ENCODE measurements at regions of chrX and their contacts with region 1.

Region 1: GRCh38 chrX:81121513-81122382 is 80.0 kb downstream of the HMGN5 start:
- DNase-seq: peak; percentile 86
- ATAC-seq: peak; percentile 95
- H3K4me3 ChIP-seq: peak overlapping the region; percentile 42 to 58
- H3K27ac ChIP-seq: no peak overlapping the region; the same call in 1 of the 2 replicates
- H3K4me1 ChIP-seq: peaks cover 0 to 4% of the 10 kb centered on the region in 2 experiments; a peak in 2 of 4 replicates
- H3K27me3 ChIP-seq: no peaks in the 10 kb centered on the region
- CTCF ChIP-seq: no peak
- POLR2A ChIP-seq: peak; percentile 61
- RAD21 ChIP-seq: no peak

Region 2: GRCh38 chrX:80812176-80812575 is 309.6 kb before region 1 on chrX:
- CTCF ChIA-PET with region 1: no interaction called
- POLR2A ChIA-PET with region 1: interaction called, 3 read pairs
- RAD21 ChIA-PET with region 1: no interaction called
- intact Hi-C with region 1: loop called (anchors 5 kb)
- DNase-seq: no peak
- ATAC-seq: peak; percentile 31; the same call in 1 of the 2 replicates
- H3K4me3 ChIP-seq: no peak overlapping the region
- H3K27ac ChIP-seq: peak overlapping the region; percentile 38; the same call in 1 of the 2 replicates
- H3K4me1 ChIP-seq: peaks cover 5 to 18% of the 10 kb centered on the region in 2 experiments; a peak in 3 of 4 replicates
- H3K27me3 ChIP-seq: no peaks in the 10 kb centered on the region
- CTCF ChIP-seq: peak in 2 of 3 experiments; percentile 12 to 29; a peak in 3 of 6 replicates
- POLR2A ChIP-seq: no peak
- RAD21 ChIP-seq: no peak

Region 3: GRCh38 chrX:81174286-81174685 is 52.5 kb after region 1 on chrX:
- CTCF ChIA-PET with region 1: no interaction called
- POLR2A ChIA-PET with region 1: no interaction called
- RAD21 ChIA-PET with region 1: no interaction called
- intact Hi-C with region 1: no loop called
- DNase-seq: no peak
- ATAC-seq: peak; percentile 58
- H3K4me3 ChIP-seq: no peak overlapping the region
- H3K27ac ChIP-seq: no peak overlapping the region
- H3K4me1 ChIP-seq: no peaks in the 10 kb centered on the region
- H3K27me3 ChIP-seq: no peaks in the 10 kb centered on the region
- CTCF ChIP-seq: peak in 1 of 3 experiments; percentile 41; a peak in 1 of 6 replicates
- POLR2A ChIP-seq: no peak
- RAD21 ChIP-seq: peak; percentile 25

Measured in HCT116 (cell line).